Left ventricle myocardium inferior (tissue), 1 donor: ENCODE measurements at regions of chr6 and their contacts with region 1.

Region 1: DNA sequence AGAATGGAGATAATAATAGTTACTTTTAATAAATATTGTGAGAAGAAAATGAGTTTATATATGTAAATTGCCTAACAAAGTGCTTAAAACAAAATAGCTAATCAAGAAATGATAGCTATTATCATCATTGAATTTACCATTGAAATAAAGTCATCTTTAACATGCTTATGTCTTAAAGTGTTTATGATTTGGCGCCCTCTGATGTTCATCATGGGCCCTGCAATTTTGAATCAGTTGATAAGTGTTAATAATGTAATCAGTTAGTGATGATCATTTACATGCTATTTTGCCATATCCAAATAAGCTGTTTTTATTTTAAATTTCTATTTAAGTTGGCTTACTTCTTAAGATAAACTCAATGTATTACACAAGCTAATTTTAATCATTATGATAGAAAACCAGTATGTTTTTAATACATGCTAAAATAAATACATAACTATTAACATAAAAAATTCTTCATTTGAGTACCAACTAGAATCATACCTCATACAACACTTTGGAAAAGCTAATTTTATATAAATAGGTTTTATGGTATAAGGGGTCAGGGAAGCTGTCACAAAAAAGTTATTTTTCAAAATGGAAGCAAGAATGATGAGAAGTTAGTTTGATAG is 39.2 kb upstream of the TPD52L1 start:
- DNase-seq: no peak
- H3K4me3 ChIP-seq: no peak overlapping the region
- H3K27ac ChIP-seq: no peak overlapping the region
- H3K4me1 ChIP-seq: no peaks in the 10 kb centered on the region
- H3K27me3 ChIP-seq: no peaks in the 10 kb centered on the region
- CTCF ChIP-seq: peak; percentile 92

Region 2: GRCh38 chr6:124298730-124299129 is 815.6 kb before region 1 on chr6:
- intact Hi-C with region 1: no loop called
- DNase-seq: no peak
- H3K4me3 ChIP-seq: no peak overlapping the region
- H3K27ac ChIP-seq: no peak overlapping the region
- H3K4me1 ChIP-seq: no peaks in the 10 kb centered on the region
- H3K27me3 ChIP-seq: no peaks in the 10 kb centered on the region
- CTCF ChIP-seq: no peak

Region 3: DNA sequence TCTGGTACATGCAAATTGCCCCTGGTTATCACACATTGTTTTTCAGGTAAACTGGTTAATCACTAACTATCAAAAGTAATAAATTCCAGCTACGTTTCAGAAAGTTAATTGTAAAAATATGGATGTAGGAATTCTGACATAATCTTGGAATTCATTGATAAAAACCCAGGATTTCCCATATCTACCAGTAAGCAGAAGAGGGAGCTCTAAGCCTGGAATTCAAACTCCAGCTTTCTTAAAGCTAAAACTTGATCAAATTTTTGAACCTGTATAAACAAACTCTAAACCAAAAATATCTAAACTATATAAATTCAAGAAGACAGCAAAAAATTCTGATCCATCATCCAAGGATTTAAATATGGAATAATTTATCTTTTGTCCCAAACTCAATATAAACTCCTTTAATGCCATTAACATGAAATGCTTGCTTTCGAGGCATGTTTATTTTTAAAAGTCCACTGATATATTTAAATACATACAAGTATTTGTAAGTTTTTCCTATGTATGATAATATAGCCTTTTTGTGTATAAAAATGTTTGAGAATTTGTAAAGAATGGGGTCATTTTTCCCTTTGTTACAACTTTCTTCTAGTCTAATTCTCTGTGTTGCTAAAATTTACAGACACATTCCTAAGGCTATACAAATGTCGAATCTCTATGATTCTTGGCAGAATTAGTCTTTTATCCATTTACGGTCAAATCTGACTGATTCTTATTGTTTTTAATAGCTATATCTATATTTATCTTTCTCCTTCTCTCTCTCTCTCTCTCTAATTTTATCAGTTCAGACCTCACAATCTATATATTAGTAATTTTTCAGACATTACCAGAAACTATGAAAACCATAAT is 243.5 kb before region 1 on chr6:
- intact Hi-C with region 1: loop called (anchors 2 kb)
- DNase-seq: no peak
- H3K4me3 ChIP-seq: no peak overlapping the region
- H3K27ac ChIP-seq: no peak overlapping the region
- H3K4me1 ChIP-seq: no peaks in the 10 kb centered on the region
- H3K27me3 ChIP-seq: no peaks in the 10 kb centered on the region
- CTCF ChIP-seq: peak; percentile 80

Region 4: GRCh38 chr6:125273965-125274364 is 159.6 kb after region 1 on chr6:
- intact Hi-C with region 1: no loop called
- DNase-seq: no peak
- H3K4me3 ChIP-seq: no peak overlapping the region
- H3K27ac ChIP-seq: peak overlapping the region; percentile 13
- H3K4me1 ChIP-seq: peaks cover 20% of the 10 kb centered on the region
- H3K27me3 ChIP-seq: no peaks in the 10 kb centered on the region
- CTCF ChIP-seq: no peak